ENCODE measurements at regions of chr11 and their contacts with region 1.

Region 1: DNA sequence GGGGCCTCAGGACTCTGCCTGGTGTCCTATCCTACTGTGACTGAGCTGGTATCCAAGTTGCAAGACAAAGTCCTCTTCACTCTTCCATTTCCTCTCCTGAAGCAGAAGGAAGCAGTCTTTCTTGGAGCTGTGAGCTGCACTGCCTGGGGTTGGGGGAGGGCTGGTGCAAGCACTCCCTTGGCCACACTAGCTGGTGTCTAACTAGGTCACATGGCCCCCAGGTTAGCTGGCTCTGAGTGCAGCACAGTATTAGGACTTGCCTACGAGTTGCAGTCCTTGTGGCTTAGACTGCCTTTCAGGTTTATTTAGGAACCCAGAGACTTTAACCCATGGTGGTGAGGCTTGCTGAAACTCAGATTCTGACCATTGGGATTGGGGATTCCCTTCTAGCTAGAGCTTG is 138.9 kb downstream of the NELL1 start:
- DNase-seq: no peak

Region 2: GRCh38 chr11:20559523-20560300 is 248.6 kb before region 1 on chr11:
- intact Hi-C with region 1: loop called in 1 of 2 experiments (anchors 5 kb)
- DNase-seq: no peak

Region 3: GRCh38 chr11:20754933-20755332 is 53.4 kb before region 1 on chr11:
- intact Hi-C with region 1: no loop called
- DNase-seq: no peak

Measured in posterior vena cava (tissue), 2 donors.